Activated CD4-positive, alpha-beta T cell treated with anti-CD3 and anti-CD28 coated beads for 36 hours (primary cell): ENCODE measurements at regions of chr7 and their contacts with region 1.

Region 1: DNA sequence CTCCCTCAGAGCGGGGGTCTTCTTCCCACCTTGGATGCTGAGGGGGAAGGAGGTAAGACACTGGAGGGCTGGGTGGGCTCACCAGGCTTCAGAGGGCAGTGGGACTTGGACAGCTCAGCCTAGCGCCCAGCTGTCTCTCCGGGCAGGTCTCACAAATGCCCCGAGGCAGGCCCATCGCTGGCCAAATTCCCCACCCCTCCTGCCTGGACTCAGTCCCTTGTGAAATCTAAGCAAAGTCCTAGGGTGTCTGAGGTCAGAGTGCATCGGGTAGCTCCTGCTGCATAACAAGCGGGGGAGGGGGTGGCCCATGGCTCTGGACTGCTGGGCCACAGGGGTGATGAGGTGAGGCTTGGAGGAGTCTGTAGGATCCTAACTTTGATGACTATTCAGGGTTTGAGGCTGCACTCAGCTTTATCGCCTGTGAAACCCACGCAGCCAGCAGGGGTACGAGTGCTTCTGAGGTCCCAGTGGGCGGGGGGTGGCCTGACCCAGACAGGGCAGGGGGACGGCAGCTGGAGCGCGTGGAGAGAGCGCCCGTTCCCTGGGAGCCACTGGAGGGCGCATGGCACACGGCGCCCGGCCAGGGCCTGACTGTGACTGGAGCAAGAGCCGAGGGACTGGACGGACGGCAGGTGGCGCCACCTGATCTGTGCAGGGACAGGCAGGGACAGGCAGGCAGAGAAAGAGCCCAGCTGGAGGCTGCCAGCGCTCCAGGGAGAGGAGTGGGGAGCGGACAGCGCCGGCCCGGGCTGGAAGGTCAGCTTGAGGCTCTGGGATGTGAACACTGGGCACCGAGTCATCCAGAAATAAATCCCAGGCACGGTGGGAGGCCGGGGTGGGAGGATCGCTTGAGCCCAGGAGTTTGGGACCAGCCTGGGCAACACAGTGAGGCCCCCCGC is 10.0 kb downstream of the CYP2W1 start:
- DNase-seq: peak; percentile 99
- ATAC-seq: peak; percentile 100
- H3K4me3 Mint-ChIP-seq: no peak overlapping the region
- H3K27ac Mint-ChIP-seq: no peak overlapping the region
- H3K4me1 Mint-ChIP-seq: peaks cover 3% of the 10 kb centered on the region
- H3K27me3 Mint-ChIP-seq: no peaks in the 10 kb centered on the region

Region 2: GRCh38 chr7:936131-937054 is 56.6 kb before region 1 on chr7:
- CTCF ChIA-PET with region 1: no interaction called
- POLR2A ChIA-PET with region 1: no interaction called
- intact Hi-C with region 1: no loop called
- DNase-seq: peak; percentile 68
- ATAC-seq: peak; percentile 86
- H3K4me3 Mint-ChIP-seq: no peak overlapping the region
- H3K27ac Mint-ChIP-seq: peak overlapping the region; percentile 26
- H3K4me1 Mint-ChIP-seq: peaks cover 35% of the 10 kb centered on the region
- H3K27me3 Mint-ChIP-seq: no peaks in the 10 kb centered on the region

Region 3: GRCh38 chr7:1028031-1028770 is 35.2 kb after region 1 on chr7:
- CTCF ChIA-PET with region 1: interaction called, 7 read pairs
- POLR2A ChIA-PET with region 1: no interaction called
- intact Hi-C with region 1: loop called in 1 of 2 experiments (anchors 1 kb)
- DNase-seq: peak; percentile 95
- ATAC-seq: peak; percentile 87
- H3K4me3 Mint-ChIP-seq: peak overlapping the region; percentile 69
- H3K27ac Mint-ChIP-seq: peak overlapping the region; percentile 75
- H3K4me1 Mint-ChIP-seq: peaks cover 28% of the 10 kb centered on the region
- H3K27me3 Mint-ChIP-seq: no peaks in the 10 kb centered on the region

Region 4: DNA sequence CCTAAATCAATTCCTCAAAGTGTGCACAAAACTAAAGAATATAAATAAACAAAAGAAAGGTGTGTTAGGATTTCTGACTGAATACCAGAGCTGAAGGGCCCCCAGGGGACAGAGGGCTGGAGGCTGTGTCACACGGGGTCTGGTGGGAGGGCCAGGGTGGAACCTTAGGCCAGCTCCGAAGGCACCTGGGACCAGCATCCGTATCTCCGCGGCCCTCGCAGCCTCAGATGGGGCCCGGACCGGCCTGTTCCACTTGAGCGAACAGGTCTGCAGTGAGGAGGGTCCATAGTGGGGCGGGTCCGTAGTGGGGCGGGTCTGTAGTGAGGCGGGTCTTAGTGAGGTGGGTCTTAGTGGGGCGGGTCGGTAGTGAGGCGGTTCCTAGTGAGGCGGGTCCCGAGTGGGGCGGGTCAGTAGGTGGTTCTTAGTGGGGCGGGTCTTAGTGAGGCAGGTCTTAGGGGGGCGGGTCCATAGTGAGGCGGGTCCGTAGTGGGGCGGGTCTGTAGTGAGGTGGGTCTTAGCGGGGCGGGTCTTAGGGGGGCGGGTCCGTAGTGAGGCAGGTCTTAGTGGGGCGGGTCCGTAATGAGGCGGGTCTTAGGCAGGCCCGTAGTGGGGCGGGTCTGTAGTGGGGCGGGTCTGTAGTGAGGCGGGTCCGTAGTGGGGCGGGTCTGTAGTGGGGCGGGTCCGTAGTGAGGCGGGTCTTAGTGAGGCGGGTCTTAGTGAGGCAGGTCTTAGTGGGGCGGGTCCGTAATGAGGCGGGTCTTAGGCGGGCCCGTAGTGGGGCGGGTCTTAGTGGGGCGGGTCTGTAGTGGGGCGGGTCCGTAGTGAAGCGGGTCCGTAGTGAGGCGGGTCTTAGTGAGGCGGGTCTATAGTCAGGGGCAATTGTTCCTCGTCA is 66.5 kb after region 1 on chr7:
- CTCF ChIA-PET with region 1: interaction called, 135 read pairs
- POLR2A ChIA-PET with region 1: no interaction called
- intact Hi-C with region 1: no loop called
- DNase-seq: peak; percentile 62
- ATAC-seq: peak; percentile 66
- H3K4me3 Mint-ChIP-seq: no peak overlapping the region
- H3K27ac Mint-ChIP-seq: no peak overlapping the region
- H3K4me1 Mint-ChIP-seq: peaks cover 17% of the 10 kb centered on the region
- H3K27me3 Mint-ChIP-seq: peaks cover 2% of the 10 kb centered on the region

Region 5: GRCh38 chr7:1169409-1170368 is 176.7 kb after region 1 on chr7:
- CTCF ChIA-PET with region 1: interaction called, 6 read pairs
- POLR2A ChIA-PET with region 1: no interaction called
- intact Hi-C with region 1: loop called in 1 of 2 experiments (anchors 1 kb)
- DNase-seq: peak; percentile 98
- ATAC-seq: peak; percentile 99
- H3K4me3 Mint-ChIP-seq: peak overlapping the region; percentile 71
- H3K27ac Mint-ChIP-seq: peak overlapping the region; percentile 94
- H3K4me1 Mint-ChIP-seq: peaks cover 12% of the 10 kb centered on the region
- H3K27me3 Mint-ChIP-seq: no peaks in the 10 kb centered on the region